ENCODE measurements at regions of chr11 and their contacts with region 1.

Region 1: DNA sequence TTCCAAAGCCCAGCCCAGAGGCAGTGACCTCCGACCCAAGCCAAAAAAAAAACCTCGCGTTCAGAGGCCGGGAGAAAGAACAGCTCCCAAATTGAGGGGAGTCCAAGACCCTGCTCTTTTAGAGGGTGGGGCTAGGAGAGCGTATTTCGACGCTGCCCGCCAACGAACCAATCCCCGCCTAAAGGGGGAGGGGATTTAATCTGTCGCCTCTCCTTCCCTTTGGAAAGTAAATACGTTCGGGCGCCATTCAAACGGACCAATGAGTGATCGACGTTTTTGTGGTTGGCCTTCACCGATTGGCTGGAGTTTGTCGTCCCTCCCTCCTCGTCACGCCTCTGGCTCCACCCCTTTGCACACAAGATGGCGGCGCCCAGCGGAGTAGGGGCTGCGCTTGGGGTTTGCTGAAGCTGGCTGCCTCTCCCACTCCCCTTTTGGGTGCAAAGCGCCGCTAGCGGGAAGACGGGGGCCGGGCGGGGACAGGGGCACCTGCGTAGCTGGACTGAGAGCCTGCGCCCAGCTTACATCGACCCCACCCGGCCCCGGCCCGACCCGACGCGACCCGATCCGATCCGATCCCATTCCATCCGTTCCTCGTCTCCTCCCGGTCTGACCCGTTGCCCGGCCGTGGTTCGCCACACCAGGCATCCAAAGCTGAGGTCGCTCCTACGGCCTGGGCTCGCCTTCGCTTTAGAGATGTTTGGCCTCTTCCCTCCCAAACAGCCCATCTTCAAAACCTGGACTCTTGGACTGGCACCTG is at the start of gene RNF26:
- DNase-seq: peak; percentile 97
- H3K4me3 ChIP-seq: peak within 1 kb of the TSS; percentile 84 to 96
- H3K27ac ChIP-seq: peak within 1 kb of the TSS; percentile 48 to 76
- H3K4me1 ChIP-seq: peaks cover 16 to 37% of the 10 kb centered on the region in 2 experiments; a peak in 3 of 4 replicates
- H3K27me3 ChIP-seq: no peaks in the 10 kb centered on the region
- CTCF ChIP-seq: no peak
- EP300 ChIP-seq: no peak
- RAD21 ChIP-seq: no peak
- polyA plus RNA-seq, gene RNF26: 26.6 and 31.9 TPM in 2 replicates

Region 2: DNA sequence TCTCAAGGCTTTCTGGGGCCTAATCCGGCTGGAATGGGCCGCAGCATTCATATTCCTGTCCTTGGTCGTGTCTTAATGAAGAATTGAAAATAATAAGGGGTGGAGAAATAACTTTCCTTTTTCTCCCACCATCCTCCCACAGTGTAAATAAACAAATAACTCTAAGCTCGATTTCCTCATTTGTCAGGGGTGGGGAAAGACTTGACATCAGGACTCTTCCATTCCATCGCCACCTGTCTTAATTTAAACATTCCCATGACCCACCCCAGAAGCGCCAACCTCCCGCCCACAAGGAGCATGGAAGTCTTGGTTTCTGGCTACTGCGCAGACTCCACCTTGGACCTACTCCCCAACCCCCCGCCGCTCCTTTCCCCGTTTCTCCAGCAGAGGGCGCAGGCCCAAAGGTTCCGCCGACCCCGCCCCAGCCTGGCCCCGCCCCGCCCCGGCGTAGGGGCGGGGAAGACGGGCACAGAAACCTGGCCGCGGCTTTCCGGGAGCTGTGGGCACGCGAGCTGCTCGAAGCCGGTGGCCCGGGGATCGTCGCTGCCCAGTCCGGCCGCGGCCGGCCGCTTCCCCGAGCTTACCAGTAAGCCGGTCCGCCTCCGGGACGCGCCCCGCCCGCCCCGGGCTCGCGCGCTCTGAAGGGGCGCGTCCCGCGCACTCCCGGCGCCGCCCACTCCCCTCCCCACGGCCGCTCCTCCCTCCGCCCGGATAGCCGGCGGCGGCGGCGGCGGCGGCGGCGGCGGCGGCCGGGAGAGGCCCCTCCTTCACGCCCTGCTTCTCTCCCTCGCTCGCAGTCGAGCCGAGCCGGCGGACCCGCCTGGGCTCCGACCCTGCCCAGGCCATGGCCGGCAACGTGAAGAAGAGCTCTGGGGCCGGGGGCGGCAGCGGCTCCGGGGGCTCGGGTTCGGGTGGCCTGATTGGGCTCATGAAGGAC is 128.5 kb before region 1 on chr11 and contains the start of gene CBL:
- CTCF ChIA-PET with region 1: interaction called, 25 read pairs
- POLR2A ChIA-PET with region 1: interaction called, 5 read pairs
- DNase-seq: peak; percentile 98
- H3K4me3 ChIP-seq: peak within 1 kb of the TSS; percentile 78 to 99
- H3K27ac ChIP-seq: peak within 1 kb of the TSS; percentile 90
- H3K4me1 ChIP-seq: peaks cover 5 to 7% of the 10 kb centered on the region in 2 experiments; a peak in 3 of 4 replicates
- H3K27me3 ChIP-seq: no peaks in the 10 kb centered on the region
- CTCF ChIP-seq: peak; percentile 78
- EP300 ChIP-seq: peak in 1 of 2 experiments; percentile 46; a peak in 1 of 4 replicates
- RAD21 ChIP-seq: peak; percentile 57
- polyA plus RNA-seq, gene CBL: 9.5 and 10.4 TPM in 2 replicates

Region 3: DNA sequence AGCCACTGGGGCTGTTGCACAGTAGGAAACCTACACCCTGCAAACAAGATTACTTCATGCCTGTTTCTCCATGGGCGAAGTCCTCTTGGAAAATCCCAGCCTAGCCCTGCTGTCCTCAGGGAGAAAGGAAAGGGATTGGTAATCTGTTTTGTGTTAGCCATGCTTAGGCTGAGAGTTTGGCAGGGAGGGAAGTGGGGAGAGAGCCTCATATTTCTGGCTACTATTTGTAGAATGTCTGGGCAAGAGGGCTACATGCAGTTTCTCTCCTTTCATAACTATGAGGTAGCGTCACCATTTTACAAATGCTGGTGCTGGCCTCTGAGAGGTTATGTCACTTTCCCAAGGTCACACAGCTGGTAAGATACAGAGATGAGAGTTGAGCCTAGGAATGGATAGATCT is 12.9 kb after region 1 on chr11:
- CTCF ChIA-PET with region 1: interaction called, 42 read pairs
- POLR2A ChIA-PET with region 1: interaction called, 8 read pairs
- DNase-seq: no peak
- H3K4me3 ChIP-seq: no peak overlapping the region
- H3K27ac ChIP-seq: no peak overlapping the region
- H3K4me1 ChIP-seq: peaks cover 0 to 9% of the 10 kb centered on the region in 2 experiments; a peak in 1 of 4 replicates
- H3K27me3 ChIP-seq: no peaks in the 10 kb centered on the region; the same call in 1 of the 2 replicates
- CTCF ChIP-seq: no peak
- EP300 ChIP-seq: no peak
- RAD21 ChIP-seq: no peak

Region 4: GRCh38 chr11:119363851-119364590 is 29.7 kb after region 1 on chr11:
- CTCF ChIA-PET with region 1: interaction called, 191 read pairs
- POLR2A ChIA-PET with region 1: interaction called, 3 read pairs
- DNase-seq: peak; percentile 97
- H3K4me3 ChIP-seq: peak overlapping the region in 1 of 2 experiments; percentile 49; a peak in 2 of 4 replicates
- H3K27ac ChIP-seq: no peak overlapping the region; a peak in 1 of 4 replicates
- H3K4me1 ChIP-seq: peaks cover 37 to 69% of the 10 kb centered on the region in 2 experiments; a peak in 3 of 4 replicates
- H3K27me3 ChIP-seq: no peaks in the 10 kb centered on the region
- CTCF ChIP-seq: no peak
- EP300 ChIP-seq: no peak
- RAD21 ChIP-seq: no peak

Region 5: GRCh38 chr11:119381181-119381988 is 47.0 kb after region 1 on chr11 and contains the start of gene USP2:
- CTCF ChIA-PET with region 1: interaction called, 191 read pairs
- POLR2A ChIA-PET with region 1: no interaction called
- DNase-seq: peak; percentile 96
- H3K4me3 ChIP-seq: peak within 1 kb of the TSS; percentile 57 to 62
- H3K27ac ChIP-seq: peak within 1 kb of the TSS in 1 of 2 experiments; percentile 31; a peak in 1 of 4 replicates
- H3K4me1 ChIP-seq: peaks cover 4 to 42% of the 10 kb centered on the region in 2 experiments; a peak in 3 of 4 replicates
- H3K27me3 ChIP-seq: no peaks in the 10 kb centered on the region
- CTCF ChIP-seq: peak; percentile 83
- EP300 ChIP-seq: no peak
- RAD21 ChIP-seq: peak; percentile 70
- polyA plus RNA-seq, gene USP2: 0.81 and 0.97 TPM in 2 replicates

Region 6: DNA sequence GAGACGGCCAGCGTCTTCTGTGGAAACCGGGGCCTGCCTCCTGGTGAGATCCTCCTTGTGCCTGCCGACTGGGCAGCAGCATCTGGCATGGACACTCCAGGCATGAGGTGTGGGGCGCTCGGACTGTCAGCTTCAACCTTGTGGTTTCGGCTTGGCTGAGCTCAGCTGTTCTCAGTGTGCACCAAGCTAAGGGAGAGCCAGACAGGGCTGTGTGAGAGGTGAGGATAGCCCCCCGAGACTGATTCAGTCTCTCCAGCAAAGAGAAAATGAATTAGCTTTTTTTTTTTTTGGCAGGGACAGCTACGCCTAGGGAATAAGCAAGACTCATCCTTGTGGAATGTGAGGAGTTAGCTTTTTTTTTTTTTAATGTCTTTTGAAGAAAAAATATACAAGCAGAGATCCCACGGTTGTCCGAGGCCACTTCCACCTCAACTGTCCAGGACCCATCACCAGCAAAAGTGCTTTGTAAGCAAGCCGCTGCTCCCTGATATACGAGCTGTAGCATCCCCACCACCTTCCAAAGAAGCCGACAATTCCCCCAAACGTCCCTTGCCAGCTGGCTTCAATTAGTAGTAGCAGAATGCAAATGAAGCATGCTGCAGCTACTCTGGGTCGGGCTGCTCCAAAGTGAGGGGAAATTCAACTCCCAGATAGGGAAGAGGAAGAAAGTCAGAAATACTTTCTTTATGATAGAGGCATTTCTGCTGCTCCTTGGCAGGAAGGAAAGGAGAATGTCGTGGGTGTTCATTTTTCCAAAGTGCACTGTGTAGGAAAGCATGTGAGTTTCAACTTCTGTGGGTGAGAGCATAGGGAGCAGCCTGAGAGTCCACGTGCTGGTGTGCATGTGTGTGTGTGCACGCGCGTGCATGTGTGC is 98.4 kb after region 1 on chr11:
- CTCF ChIA-PET with region 1: no interaction called
- POLR2A ChIA-PET with region 1: no interaction called
- DNase-seq: peak; percentile 56
- H3K4me3 ChIP-seq: peak overlapping the region; percentile 23 to 53; a peak in 3 of 4 replicates
- H3K27ac ChIP-seq: peak overlapping the region; percentile 77 to 94
- H3K4me1 ChIP-seq: peaks cover 14 to 20% of the 10 kb centered on the region in 2 experiments; a peak in 3 of 4 replicates
- H3K27me3 ChIP-seq: no peaks in the 10 kb centered on the region
- CTCF ChIP-seq: no peak
- EP300 ChIP-seq: peak in 1 of 2 experiments; percentile 79; a peak in 1 of 4 replicates
- RAD21 ChIP-seq: no peak

Region 7: GRCh38 chr11:119474682-119475596 is 140.6 kb after region 1 on chr11:
- CTCF ChIA-PET with region 1: interaction called, 88 read pairs
- POLR2A ChIA-PET with region 1: interaction called, 7 read pairs
- DNase-seq: peak; percentile 86
- H3K4me3 ChIP-seq: no peak overlapping the region; a peak in 1 of 4 replicates
- H3K27ac ChIP-seq: no peak overlapping the region
- H3K4me1 ChIP-seq: peaks cover 19 to 26% of the 10 kb centered on the region in 2 experiments; a peak in 3 of 4 replicates
- H3K27me3 ChIP-seq: 0 out of 2 replicates have a peak, but pooled peaks cover 6% of the 10 kb centered on the region
- CTCF ChIP-seq: peak; percentile 96
- EP300 ChIP-seq: no peak
- RAD21 ChIP-seq: peak; percentile 98

Measured in SK-N-SH (cell line).